Activated CD4-positive, alpha-beta T cell treated with anti-CD3 and anti-CD28 coated beads for 36 hours (primary cell): ENCODE measurements at regions of chr11 and their contacts with region 1.

Region 1: DNA sequence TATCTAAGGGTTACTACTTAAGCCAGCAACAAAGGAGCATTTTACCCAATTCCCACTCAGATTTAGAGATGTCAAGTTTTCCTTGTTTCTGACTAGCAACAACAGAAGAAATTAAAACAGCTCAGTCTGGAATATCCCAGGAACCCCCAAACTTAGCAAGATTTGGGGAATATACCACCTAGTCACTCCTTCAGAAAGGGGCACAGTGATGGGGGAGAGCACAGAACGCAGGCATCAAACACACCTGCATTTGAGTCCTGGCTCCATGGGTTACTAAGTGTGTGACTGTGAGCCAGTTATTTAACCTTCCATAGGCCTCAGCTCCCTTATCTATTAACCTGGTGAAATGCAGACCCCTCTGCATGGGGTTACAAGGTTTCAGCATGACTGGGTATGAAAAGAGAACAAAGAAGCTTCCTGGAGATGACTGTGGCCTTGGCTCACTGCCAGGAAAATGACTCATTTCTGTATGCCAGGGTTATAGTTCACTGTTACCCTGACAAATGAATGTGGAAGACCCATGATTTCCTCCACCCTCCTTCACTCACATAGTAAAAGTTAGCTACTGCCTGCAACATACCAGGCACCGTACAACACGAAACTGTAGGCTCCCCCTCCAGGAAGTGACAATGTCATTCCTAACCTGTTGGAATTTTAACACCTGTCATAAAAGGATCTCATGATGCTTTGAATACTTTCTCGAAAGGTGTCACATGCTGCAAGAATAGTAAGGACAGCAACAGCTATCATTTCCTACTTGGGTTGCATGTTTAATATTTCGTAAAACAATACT is 79.6 kb downstream of the ME3 start:
- DNase-seq: peak; percentile 96
- ATAC-seq: peak; percentile 96
- H3K4me3 Mint-ChIP-seq: no peak overlapping the region
- H3K27ac Mint-ChIP-seq: peak overlapping the region; percentile 87
- H3K4me1 Mint-ChIP-seq: peaks cover 70% of the 10 kb centered on the region
- H3K27me3 Mint-ChIP-seq: no peaks in the 10 kb centered on the region

Region 2: GRCh38 chr11:85627998-85628770 is 964.7 kb before region 1 on chr11 and contains the start of gene TMEM126B:
- CTCF ChIA-PET with region 1: no interaction called
- POLR2A ChIA-PET with region 1: no interaction called
- intact Hi-C with region 1: loop called in 1 of 2 experiments (anchors 1 kb)
- DNase-seq: peak; percentile 99
- ATAC-seq: peak; percentile 95
- H3K4me3 Mint-ChIP-seq: peak within 1 kb of the TSS; percentile 98
- H3K27ac Mint-ChIP-seq: peak within 1 kb of the TSS; percentile 100
- H3K4me1 Mint-ChIP-seq: peaks cover 35% of the 10 kb centered on the region
- H3K27me3 Mint-ChIP-seq: no peaks in the 10 kb centered on the region
- total RNA-seq, gene TMEM126B: 62.7 to 74.2 TPM

Region 3: GRCh38 chr11:86041975-86042378 is 550.9 kb before region 1 on chr11:
- CTCF ChIA-PET with region 1: no interaction called
- POLR2A ChIA-PET with region 1: no interaction called
- intact Hi-C with region 1: loop called (anchors 5 to 10 kb)
- DNase-seq: peak; percentile 63
- ATAC-seq: peak; percentile 70
- H3K4me3 Mint-ChIP-seq: peak overlapping the region; percentile 20
- H3K27ac Mint-ChIP-seq: peak overlapping the region; percentile 68
- H3K4me1 Mint-ChIP-seq: peaks cover 71% of the 10 kb centered on the region
- H3K27me3 Mint-ChIP-seq: no peaks in the 10 kb centered on the region

Region 4: GRCh38 chr11:86182976-86183584 is 409.8 kb before region 1 on chr11:
- CTCF ChIA-PET with region 1: no interaction called
- POLR2A ChIA-PET with region 1: no interaction called
- intact Hi-C with region 1: loop called in 1 of 2 experiments (anchors 1 kb)
- DNase-seq: peak; percentile 89
- ATAC-seq: peak; percentile 84
- H3K4me3 Mint-ChIP-seq: no peak overlapping the region
- H3K27ac Mint-ChIP-seq: no peak overlapping the region
- H3K4me1 Mint-ChIP-seq: peaks cover 6% of the 10 kb centered on the region
- H3K27me3 Mint-ChIP-seq: no peaks in the 10 kb centered on the region

Region 5: DNA sequence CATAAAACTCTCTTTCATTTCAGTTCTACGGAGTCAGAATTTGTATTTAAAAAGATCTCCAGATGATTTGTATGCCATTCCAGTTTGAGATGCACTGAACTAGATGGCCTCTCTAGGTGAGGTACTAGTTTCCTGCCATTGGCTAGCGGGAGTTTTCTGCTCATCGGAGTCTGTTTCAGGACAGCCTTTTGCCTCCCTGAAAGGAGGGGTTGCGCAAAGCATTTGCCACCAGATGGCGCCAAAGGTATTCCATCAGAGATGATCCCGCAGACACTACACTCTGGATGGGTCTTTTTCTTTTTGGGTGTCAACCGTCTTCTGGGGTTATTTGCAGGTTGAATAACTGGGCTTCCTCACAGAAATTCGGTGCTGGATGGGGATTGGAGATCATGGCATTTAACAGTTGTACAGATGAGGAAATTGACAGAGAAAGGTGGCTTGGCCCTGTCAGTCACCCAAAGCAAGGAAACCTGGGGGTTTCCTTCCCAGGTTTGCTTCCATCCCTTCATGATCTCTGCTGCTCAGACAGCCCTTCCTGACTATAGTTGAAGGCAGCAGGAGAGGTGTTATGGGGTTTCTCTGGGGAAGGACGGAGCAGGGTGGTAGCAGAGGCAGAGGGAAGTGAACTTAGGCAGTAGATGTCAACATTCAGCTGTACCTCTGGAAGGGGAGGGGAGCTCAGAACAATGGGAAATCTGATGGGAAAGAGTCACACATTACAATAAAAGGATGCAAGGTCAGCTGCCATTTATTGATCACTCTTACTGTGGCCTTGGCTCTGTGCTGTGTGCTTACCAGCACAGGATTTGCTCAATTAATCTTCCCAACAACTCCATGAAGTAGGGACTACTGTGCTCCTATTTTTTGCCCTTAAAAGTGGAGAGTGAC is 136.6 kb before region 1 on chr11:
- CTCF ChIA-PET with region 1: interaction called, 9 read pairs
- POLR2A ChIA-PET with region 1: no interaction called
- intact Hi-C with region 1: loop called (anchors 5 kb)
- DNase-seq: peak; percentile 93
- ATAC-seq: peak; percentile 92
- H3K4me3 Mint-ChIP-seq: no peak overlapping the region
- H3K27ac Mint-ChIP-seq: no peak overlapping the region
- H3K4me1 Mint-ChIP-seq: peaks cover 21% of the 10 kb centered on the region
- H3K27me3 Mint-ChIP-seq: no peaks in the 10 kb centered on the region

Region 6: DNA sequence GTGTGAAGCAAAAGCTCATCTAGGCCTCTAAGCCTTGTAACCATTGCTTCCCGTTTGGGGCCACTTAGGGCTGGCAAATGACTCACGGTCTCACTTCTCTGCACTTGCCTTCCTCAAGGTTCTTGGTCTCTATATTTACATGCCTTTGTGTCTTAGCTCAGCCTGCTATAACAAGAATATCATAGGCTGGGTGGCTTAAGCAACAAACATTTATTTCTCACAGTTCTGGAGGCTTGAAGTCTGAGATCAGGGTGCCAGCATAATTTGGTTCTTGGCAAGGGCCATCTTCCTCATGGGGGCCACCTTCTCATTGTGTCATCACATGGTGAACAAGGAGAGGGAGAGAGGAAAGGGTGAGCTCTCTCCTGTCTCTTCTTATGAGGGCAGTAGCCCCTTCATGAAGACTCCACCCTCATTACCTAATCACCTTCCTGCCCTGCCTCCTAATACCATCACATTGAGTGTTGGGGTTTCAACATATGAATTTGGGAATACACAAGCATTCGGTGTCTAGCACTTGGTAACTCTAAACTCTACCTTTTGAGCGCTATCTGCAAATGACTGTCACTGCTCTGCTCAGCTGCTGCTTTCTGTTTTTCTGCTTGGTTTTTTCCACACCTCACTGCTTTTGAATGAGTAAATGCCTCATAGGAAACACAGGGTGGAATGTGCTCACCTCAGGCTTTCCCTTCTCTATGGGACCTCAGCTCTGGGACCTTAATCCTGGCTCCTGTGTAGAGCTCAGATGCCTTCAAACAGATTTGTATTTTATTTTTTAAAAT is 95.7 kb after region 1 on chr11:
- CTCF ChIA-PET with region 1: no interaction called
- POLR2A ChIA-PET with region 1: interaction called, 5 read pairs
- intact Hi-C with region 1: loop called (anchors 1 kb)
- DNase-seq: peak; percentile 69
- ATAC-seq: peak; percentile 87
- H3K4me3 Mint-ChIP-seq: peak overlapping the region; percentile 16
- H3K27ac Mint-ChIP-seq: peak overlapping the region; percentile 92
- H3K4me1 Mint-ChIP-seq: peaks cover 28% of the 10 kb centered on the region
- H3K27me3 Mint-ChIP-seq: peaks cover 7% of the 10 kb centered on the region

Region 7: GRCh38 chr11:86947541-86947940 is 354.7 kb after region 1 on chr11:
- CTCF ChIA-PET with region 1: no interaction called
- POLR2A ChIA-PET with region 1: no interaction called
- intact Hi-C with region 1: no loop called
- DNase-seq: no peak
- ATAC-seq: no peak
- H3K4me3 Mint-ChIP-seq: no peak overlapping the region
- H3K27ac Mint-ChIP-seq: no peak overlapping the region
- H3K4me1 Mint-ChIP-seq: no peaks in the 10 kb centered on the region
- H3K27me3 Mint-ChIP-seq: peaks cover 11% of the 10 kb centered on the region

Region 8: GRCh38 chr11:88357323-88358039 is 1764.6 kb after region 1 on chr11:
- CTCF ChIA-PET with region 1: no interaction called
- POLR2A ChIA-PET with region 1: no interaction called
- intact Hi-C with region 1: loop called in 1 of 2 experiments (anchors 5 kb)
- DNase-seq: no peak
- ATAC-seq: peak; percentile 86
- H3K4me3 Mint-ChIP-seq: no peak overlapping the region
- H3K27ac Mint-ChIP-seq: peak overlapping the region; percentile 69
- H3K4me1 Mint-ChIP-seq: peaks cover 52% of the 10 kb centered on the region
- H3K27me3 Mint-ChIP-seq: no peaks in the 10 kb centered on the region